Mammary epithelial cell (primary cell): ENCODE measurements at regions of chr18 and their contacts with region 1.

Region 1: GRCh38 chr18:23967321-23968089 is 47.0 kb upstream of the TTC39C start:
- DNase-seq: no peak
- H3K4me3 ChIP-seq: no peak overlapping the region
- H3K27ac ChIP-seq: no peak overlapping the region
- H3K4me1 ChIP-seq: peaks cover 13% of the 10 kb centered on the region
- H3K27me3 ChIP-seq: no peaks in the 10 kb centered on the region
- CTCF ChIP-seq: no peak

Region 2: GRCh38 chr18:24027156-24027827 is 59.8 kb after region 1 on chr18:
- CTCF ChIA-PET with region 1: no interaction called
- dilution Hi-C with region 1: no loop called
- in situ Hi-C with region 1: no loop called
- intact Hi-C with region 1: no loop called
- DNase-seq: peak; percentile 90
- H3K4me3 ChIP-seq: no peak overlapping the region
- H3K27ac ChIP-seq: peak overlapping the region; percentile 18
- H3K4me1 ChIP-seq: peaks cover 27% of the 10 kb centered on the region
- H3K27me3 ChIP-seq: no peaks in the 10 kb centered on the region
- CTCF ChIP-seq: no peak

Region 3: DNA sequence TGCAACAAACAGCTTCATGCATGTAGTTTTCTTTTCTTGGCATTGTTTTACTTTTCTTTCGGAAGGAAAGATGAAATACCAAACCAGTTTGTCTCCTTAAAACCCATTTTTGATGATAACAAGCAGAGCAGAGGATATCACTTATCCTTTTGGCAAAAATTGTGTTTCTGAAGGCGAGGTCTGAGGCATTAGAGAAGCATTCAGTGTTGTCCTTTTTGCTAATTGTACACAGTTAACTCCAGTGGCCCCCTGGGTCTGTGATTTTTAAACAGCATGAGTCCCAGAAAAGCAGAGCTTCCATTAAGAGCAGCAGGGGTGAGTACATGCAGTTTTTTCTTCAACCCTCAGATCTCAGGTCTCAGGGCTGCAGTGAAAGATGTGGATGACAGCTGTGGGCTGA is 88.4 kb after region 1 on chr18:
- CTCF ChIA-PET with region 1: no interaction called
- dilution Hi-C with region 1: no loop called
- in situ Hi-C with region 1: no loop called
- intact Hi-C with region 1: loop called (anchors 5 kb)
- DNase-seq: no peak
- H3K4me3 ChIP-seq: no peak overlapping the region
- H3K27ac ChIP-seq: peak overlapping the region; percentile 81
- H3K4me1 ChIP-seq: peaks cover 52% of the 10 kb centered on the region
- H3K27me3 ChIP-seq: no peaks in the 10 kb centered on the region
- CTCF ChIP-seq: no peak

Region 4: DNA sequence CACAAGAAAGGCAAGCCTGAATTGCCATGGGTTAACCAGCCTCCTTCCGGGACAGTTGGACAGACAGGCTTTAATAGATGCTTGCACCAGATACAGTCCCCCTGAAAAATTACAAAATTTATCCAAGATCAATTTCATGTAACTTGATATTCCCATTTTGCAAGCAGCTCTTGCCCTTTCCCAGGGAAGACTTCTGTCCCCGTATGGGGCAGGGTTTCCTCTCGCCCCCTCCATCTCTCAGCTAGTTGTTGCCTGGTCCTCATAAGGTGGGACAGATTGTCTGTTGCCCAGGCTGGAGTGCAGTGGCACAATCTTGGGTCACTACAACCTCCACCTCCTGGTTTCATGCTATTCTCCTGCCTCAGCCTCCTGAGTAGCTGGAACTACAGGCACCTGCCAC is 108.2 kb after region 1 on chr18:
- CTCF ChIA-PET with region 1: no interaction called
- dilution Hi-C with region 1: no loop called
- in situ Hi-C with region 1: no loop called
- intact Hi-C with region 1: loop called (anchors 1 kb)
- DNase-seq: no peak
- H3K4me3 ChIP-seq: no peak overlapping the region
- H3K27ac ChIP-seq: no peak overlapping the region
- H3K4me1 ChIP-seq: peaks cover 5% of the 10 kb centered on the region
- H3K27me3 ChIP-seq: no peaks in the 10 kb centered on the region
- CTCF ChIP-seq: no peak

Region 5: GRCh38 chr18:24112874-24113615 is 145.5 kb after region 1 on chr18:
- CTCF ChIA-PET with region 1: no interaction called
- dilution Hi-C with region 1: loop called (anchors 5 kb)
- in situ Hi-C with region 1: loop called (anchors 5 to 10 kb)
- intact Hi-C with region 1: no loop called
- DNase-seq: peak; percentile 84
- H3K4me3 ChIP-seq: no peak overlapping the region
- H3K27ac ChIP-seq: no peak overlapping the region
- H3K4me1 ChIP-seq: peaks cover 16% of the 10 kb centered on the region
- H3K27me3 ChIP-seq: no peaks in the 10 kb centered on the region
- CTCF ChIP-seq: no peak

Region 6: GRCh38 chr18:24118750-24119577 is 151.5 kb after region 1 on chr18:
- CTCF ChIA-PET with region 1: no interaction called
- dilution Hi-C with region 1: loop called (anchors 5 kb)
- in situ Hi-C with region 1: loop called (anchors 5 to 10 kb)
- intact Hi-C with region 1: loop called (anchors 1 kb)
- DNase-seq: peak; percentile 69
- H3K4me3 ChIP-seq: no peak overlapping the region
- H3K27ac ChIP-seq: no peak overlapping the region
- H3K4me1 ChIP-seq: no peaks in the 10 kb centered on the region
- H3K27me3 ChIP-seq: no peaks in the 10 kb centered on the region
- CTCF ChIP-seq: peak; percentile 75

Region 7: DNA sequence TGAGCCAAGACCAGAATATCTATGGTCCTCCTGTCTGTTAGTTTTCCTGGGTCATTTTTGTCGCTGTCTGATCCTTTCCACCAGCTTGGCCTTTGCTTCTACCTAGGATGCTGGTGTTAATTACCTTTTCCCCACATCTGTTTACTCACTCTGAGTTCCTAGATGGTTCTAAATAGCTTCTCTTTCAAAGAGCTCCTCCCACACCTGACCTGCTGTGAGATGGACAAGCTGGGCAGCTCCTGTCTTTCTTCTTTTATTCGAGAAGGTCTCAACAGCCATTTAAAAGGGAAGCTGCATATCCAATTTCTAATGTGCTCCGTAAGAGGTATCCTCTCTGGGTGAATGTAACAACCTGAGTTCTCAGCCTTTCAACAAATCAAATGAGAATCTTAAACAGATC is 649.1 kb after region 1 on chr18:
- CTCF ChIA-PET with region 1: no interaction called
- dilution Hi-C with region 1: no loop called
- in situ Hi-C with region 1: no loop called
- intact Hi-C with region 1: no loop called
- DNase-seq: no peak
- H3K4me3 ChIP-seq: no peak overlapping the region
- H3K27ac ChIP-seq: no peak overlapping the region
- H3K4me1 ChIP-seq: no peaks in the 10 kb centered on the region
- H3K27me3 ChIP-seq: no peaks in the 10 kb centered on the region
- CTCF ChIP-seq: no peak